Ascending aorta (tissue), 2 donors: ENCODE measurements at regions of chr10 and their contacts with region 1.

Region 1: DNA sequence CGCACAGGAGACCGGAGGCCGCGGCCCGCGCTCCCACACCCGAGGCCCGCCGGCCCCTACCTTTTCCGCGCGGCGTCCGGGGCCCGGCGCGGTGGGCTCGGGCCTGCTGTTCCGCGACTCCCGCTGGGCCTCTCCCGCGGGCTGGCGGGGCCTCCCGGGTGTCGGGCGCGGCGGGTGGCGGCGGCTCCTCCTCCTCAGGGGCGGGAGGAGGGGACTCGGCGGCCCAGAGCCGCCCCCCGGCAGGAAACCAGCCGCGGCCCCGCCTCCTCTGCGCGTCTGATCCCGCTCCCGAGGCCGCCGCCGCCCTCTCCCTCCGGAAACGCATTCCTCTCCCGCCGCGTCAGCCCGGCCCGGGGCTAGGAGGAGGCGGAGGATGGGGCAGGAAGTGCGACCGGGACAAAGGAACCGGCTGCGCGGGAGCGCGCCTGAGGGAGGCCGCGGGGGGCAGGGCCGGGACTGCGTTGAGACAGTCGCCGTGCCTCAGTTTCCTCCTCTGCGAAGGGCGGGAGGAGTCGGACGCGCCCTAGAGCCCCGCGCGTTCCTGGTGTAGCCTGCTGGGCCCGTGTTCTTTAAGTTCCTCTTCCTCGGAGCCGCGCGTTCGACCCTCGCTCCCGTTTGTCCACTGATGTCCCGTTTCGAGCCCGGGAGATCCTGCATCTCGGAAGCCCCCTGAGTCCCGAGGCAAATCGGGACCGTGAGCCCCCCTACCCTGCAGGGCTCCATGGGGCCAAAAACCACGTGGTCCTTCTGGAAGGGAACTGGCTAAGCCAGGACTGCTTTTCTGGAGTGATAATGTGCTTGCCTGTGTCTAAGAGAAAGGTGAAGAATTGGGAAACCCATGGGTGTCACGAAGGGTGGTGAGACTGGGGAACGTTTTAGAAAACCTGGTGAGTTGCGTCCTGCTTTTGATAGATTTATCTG is at the start of gene ITGB1:
- DNase-seq: peak; percentile 84 to 98
- H3K4me3 ChIP-seq: peak within 1 kb of the TSS; percentile 72 to 90
- H3K27ac ChIP-seq: peak within 1 kb of the TSS; percentile 97 to 99
- H3K4me1 ChIP-seq: peaks cover 4 to 36% of the 10 kb centered on the region in 2 donors
- H3K27me3 ChIP-seq: no peaks in the 10 kb centered on the region
- CTCF ChIP-seq: no peak
- total RNA-seq, gene ITGB1: 569 TPM

Region 2: GRCh38 chr10:32516567-32517495 is 441.5 kb before region 1 on chr10:
- intact Hi-C with region 1: no loop called
- DNase-seq: no peak
- H3K4me3 ChIP-seq: no peak overlapping the region
- H3K27ac ChIP-seq: no peak overlapping the region
- H3K4me1 ChIP-seq: no peaks in the 10 kb centered on the region
- H3K27me3 ChIP-seq: no peaks in the 10 kb centered on the region
- CTCF ChIP-seq: no peak

Region 3: GRCh38 chr10:32938554-32939061 is 19.7 kb before region 1 on chr10:
- intact Hi-C with region 1: loop called (anchors 2 kb)
- DNase-seq: no peak
- H3K4me3 ChIP-seq: peak overlapping the region; percentile 18 to 29
- H3K27ac ChIP-seq: peak overlapping the region; percentile 73 to 79
- H3K4me1 ChIP-seq: peaks cover 24 to 57% of the 10 kb centered on the region in 2 donors
- H3K27me3 ChIP-seq: no peaks in the 10 kb centered on the region
- CTCF ChIP-seq: no peak

Region 4: DNA sequence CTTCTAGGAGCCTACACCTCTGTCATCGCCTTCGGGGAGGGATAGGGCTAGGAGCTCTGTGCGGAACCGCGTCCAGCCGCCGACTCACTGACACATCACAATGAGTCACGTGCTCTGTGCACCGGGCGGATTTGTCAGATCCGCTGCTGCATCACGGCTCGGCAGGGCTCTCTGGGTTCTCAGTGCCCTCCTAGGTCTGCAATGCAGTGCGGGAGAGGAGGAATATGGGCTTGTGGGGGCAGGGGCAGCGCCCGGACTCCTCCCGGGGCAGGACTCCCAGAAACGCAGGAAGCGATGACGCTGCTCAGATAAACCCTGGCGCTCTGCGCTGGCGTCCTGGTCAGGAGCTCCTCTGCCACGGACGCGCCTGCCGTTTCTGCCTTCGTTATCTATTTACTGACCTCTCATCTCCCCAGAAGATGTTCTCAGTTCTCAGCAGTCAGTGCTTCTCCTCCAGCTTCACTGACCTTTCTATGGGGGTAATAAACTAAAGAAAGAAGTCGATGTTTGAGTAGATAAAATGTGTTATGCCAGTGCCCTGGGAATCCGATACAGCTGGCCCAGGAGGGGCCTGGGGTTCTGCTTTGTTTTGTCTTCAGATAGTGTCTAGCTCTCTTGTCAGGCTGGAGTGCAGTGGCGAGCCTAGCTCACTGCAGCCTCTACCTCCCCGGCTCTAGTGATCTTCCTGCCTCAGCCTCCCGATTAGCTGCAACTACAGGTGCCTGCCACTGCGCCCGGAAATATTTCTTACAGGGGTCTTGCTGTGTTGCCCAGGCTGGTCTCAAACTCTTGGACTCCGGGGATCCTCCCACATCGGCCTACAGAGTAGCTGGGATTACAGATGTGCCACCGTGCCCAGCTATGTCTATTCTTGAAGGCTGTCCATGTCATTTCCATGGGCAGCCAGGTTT is 22.5 kb after region 1 on chr10:
- intact Hi-C with region 1: loop called (anchors 1 kb)
- DNase-seq: peak; percentile 92 to 99
- H3K4me3 ChIP-seq: peak overlapping the region; percentile 41 to 61
- H3K27ac ChIP-seq: peak overlapping the region; percentile 93 to 96
- H3K4me1 ChIP-seq: peaks cover 3 to 19% of the 10 kb centered on the region in 2 donors
- H3K27me3 ChIP-seq: no peaks in the 10 kb centered on the region
- CTCF ChIP-seq: no peak